Mammary epithelial cell (primary cell): ENCODE measurements at regions of chr1 and their contacts with region 1.

Region 1: GRCh38 chr1:155859234-155859829 is at the start of gene SYT11:
- DNase-seq: peak; percentile 92
- H3K4me3 ChIP-seq: peak within 1 kb of the TSS; percentile 46 to 75 (median 54)
- H3K27ac ChIP-seq: peak within 1 kb of the TSS; percentile 70
- H3K4me1 ChIP-seq: peaks cover 10% of the 10 kb centered on the region
- H3K27me3 ChIP-seq: no peaks in the 10 kb centered on the region
- CTCF ChIP-seq: no peak
- total RNA-seq, gene SYT11: 0.12 to 0.33 TPM

Region 2: GRCh38 chr1:155729031-155729898 is 130.1 kb before region 1 on chr1:
- CTCF ChIA-PET with region 1: no interaction called
- dilution Hi-C with region 1: no loop called
- in situ Hi-C with region 1: no loop called
- intact Hi-C with region 1: no loop called
- DNase-seq: peak; percentile 66
- H3K4me3 ChIP-seq: no peak overlapping the region
- H3K27ac ChIP-seq: no peak overlapping the region
- H3K4me1 ChIP-seq: no peaks in the 10 kb centered on the region
- H3K27me3 ChIP-seq: no peaks in the 10 kb centered on the region
- CTCF ChIP-seq: peak; percentile 66 to 72

Region 3: GRCh38 chr1:155759966-155760630 is 99.2 kb before region 1 on chr1:
- CTCF ChIA-PET with region 1: no interaction called
- dilution Hi-C with region 1: loop called (anchors 5 kb)
- in situ Hi-C with region 1: no loop called
- intact Hi-C with region 1: no loop called
- DNase-seq: peak; percentile 72
- H3K4me3 ChIP-seq: no peak overlapping the region
- H3K27ac ChIP-seq: peak overlapping the region; percentile 71
- H3K4me1 ChIP-seq: peaks cover 31% of the 10 kb centered on the region
- H3K27me3 ChIP-seq: no peaks in the 10 kb centered on the region
- CTCF ChIP-seq: no peak

Region 4: DNA sequence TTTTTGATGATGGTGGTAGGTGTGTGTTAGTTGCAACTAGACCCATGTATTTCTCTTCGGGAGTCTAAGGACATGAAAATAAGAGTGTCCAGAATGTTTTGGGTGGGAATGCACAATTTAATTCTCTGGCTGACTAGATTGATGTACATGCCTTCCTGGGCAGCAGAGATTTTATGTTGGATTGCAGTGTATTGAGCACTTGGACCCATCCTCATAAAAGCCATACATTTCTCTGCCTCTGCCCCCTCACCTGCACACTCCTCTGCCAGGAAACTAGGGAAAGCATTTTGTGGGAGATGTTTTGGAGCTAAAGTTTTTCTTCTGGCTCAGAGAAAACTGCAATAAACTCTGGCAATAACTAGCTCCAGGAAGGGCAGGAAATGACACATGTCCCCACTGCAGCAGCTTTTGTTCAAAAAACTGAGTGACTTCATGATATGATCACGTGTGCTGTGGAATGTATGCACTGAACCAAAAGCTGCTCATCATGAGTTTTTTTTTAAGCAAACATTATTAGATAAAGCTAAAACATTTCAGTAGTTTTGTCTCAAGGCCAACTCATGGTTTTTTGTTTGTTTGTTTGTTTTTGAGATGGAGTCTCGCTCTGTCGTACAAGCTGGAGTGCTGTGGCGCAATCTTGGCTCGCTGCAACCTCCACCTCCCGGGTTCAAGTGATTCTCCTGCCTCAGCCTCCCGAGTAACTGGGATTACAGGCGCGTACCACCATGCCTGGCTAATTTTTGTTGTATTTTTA is 34.2 kb after region 1 on chr1:
- CTCF ChIA-PET with region 1: no interaction called
- dilution Hi-C with region 1: no loop called
- in situ Hi-C with region 1: no loop called
- intact Hi-C with region 1: loop called (anchors 1 kb)
- DNase-seq: peak; percentile 75
- H3K4me3 ChIP-seq: no peak overlapping the region
- H3K27ac ChIP-seq: peak overlapping the region; percentile 63
- H3K4me1 ChIP-seq: peaks cover 20% of the 10 kb centered on the region
- H3K27me3 ChIP-seq: no peaks in the 10 kb centered on the region
- CTCF ChIP-seq: no peak

Region 5: DNA sequence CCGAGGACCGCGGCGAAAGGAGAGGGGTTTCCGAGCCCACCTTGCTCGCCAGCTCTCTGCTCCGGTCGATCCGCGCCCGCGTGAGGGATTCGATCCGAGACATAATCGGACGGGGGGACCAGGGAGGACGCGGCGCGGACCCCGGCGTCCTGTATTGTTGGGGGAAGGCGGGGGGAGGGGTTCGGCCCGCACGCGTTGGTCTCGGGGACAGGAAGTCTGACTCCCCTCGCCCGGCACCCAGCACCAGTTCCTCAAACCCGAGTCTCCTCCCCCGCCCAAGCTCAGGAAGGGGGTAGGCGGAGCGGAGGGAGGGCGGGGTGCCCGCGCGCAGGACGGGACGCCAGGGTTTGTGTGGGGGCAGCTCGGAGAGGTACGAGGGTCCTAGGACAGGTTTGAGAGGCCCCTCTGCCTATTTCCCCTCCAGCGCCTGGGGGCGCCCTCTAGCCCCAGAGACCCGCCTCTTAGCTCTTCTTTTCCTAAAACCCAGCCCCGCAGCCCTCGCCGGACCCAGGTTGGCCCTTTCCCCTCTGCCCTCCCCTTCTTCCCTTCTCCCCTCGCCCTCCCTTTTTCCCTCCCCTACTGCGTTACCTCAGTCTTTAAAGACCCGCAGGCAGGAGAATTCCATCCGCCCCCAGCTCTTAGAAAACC is 119.1 kb after region 1 on chr1 and contains the start of gene ARHGEF2:
- CTCF ChIA-PET with region 1: no interaction called
- dilution Hi-C with region 1: no loop called
- in situ Hi-C with region 1: no loop called
- intact Hi-C with region 1: loop called (anchors 5 kb)
- DNase-seq: peak; percentile 68
- H3K4me3 ChIP-seq: peak within 1 kb of the TSS; percentile 82 to 91 (median 91)
- H3K27ac ChIP-seq: peak within 1 kb of the TSS; percentile 76
- H3K4me1 ChIP-seq: peaks cover 73% of the 10 kb centered on the region
- H3K27me3 ChIP-seq: no peaks in the 10 kb centered on the region
- CTCF ChIP-seq: peak in 1 of 2 donors; percentile 29
- total RNA-seq, gene ARHGEF2: 79.4 to 161 TPM